Right lobe of liver (tissue), 6 donors: ENCODE measurements at regions of chr6 and their contacts with region 1.

Region 1: DNA sequence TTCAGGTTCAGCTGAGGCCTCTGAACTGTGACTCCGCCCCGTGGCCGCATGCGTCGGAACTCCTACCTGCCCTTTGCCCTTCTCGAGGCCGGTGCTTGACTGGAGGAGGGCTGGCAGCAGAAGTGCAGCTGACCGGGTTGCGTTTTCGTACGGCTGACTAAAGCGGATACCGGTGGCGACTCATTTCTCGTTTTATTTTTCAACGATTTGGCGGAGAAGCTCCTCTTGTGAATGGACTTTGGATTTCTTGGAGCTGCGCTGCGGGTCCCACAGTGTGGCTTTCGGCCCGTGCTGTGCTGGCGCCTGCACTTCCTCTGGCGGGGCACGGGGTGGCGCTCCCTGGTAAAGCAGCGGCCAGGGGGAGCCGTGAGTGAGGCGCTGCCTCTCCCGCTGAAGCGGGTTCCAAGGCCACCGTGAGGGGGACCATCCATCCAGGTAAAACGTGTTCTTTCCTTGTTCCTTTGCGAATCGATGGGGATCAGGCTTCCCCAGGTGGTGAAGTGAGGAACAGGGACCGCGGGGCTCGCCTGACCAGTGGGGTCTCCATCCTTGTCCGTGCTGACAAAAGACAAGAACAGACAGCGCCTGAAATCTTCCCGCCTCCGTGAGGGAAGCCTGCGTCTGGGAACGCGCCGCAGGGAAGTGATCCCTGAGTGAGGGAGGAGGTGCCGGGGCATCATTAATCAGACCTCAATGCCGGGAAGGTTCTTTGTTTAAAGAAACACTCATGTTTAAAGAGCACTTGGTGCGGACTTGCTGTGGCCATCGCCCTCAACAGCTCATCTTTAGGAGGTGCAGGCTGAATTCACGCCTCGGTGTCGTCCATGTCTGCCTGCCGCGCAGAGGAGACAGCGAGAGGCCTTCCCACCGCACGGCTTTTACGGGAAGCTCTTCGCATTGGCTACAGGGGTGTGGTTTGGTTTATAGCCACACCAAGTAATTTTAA is 38.8 kb downstream of the ERMARD start:
- DNase-seq: peak; percentile 86 to 93 (median 92)
- ATAC-seq: peak; percentile 94 to 97 (median 95)
- H3K4me3 ChIP-seq: peak overlapping the region; percentile 48 to 73 (median 65)
- H3K27ac ChIP-seq: peak overlapping the region; percentile 30 to 82 (median 76)
- H3K4me1 ChIP-seq: peaks cover 0 to 18% (median 7%) of the 10 kb centered on the region in 4 donors
- H3K27me3 ChIP-seq: no peaks in the 10 kb centered on the region
- CTCF ChIP-seq: peak; percentile 97 to 99 (median 98)
- POLR2A ChIP-seq: peak; percentile 32

Region 2: GRCh38 chr6:169250660-169251059 is 539.6 kb before region 1 on chr6:
- intact Hi-C with region 1: no loop called
- DNase-seq: peak in 1 of 3 donors; percentile 16
- ATAC-seq: no peak
- H3K4me3 ChIP-seq: no peak overlapping the region
- H3K27ac ChIP-seq: no peak overlapping the region
- H3K4me1 ChIP-seq: no peaks in the 10 kb centered on the region
- H3K27me3 ChIP-seq: no peaks in the 10 kb centered on the region
- CTCF ChIP-seq: no peak
- POLR2A ChIP-seq: no peak

Region 3: DNA sequence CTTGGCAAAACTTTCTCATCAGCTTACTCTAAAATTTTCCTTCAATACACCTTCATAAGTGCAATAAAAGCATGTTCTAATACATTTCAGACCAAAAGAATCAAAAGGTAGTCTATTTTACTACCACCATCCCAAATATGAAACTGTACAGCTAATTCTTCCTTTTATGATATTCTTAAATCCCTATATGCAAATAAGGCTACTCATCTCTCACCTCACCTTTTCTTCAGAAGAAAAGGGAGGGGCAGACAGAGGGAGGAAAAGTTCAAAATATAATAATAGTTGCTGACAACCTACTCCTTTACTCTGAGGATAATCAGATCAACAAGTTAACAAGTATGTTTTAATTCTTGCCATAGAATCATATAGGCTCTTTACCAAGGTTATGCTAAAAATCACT is 81.0 kb before region 1 on chr6:
- intact Hi-C with region 1: no loop called
- DNase-seq: no peak
- ATAC-seq: no peak
- H3K4me3 ChIP-seq: no peak overlapping the region
- H3K27ac ChIP-seq: no peak overlapping the region
- H3K4me1 ChIP-seq: peaks cover 0 to 4% (median under 1%) of the 10 kb centered on the region in 4 donors
- H3K27me3 ChIP-seq: no peaks in the 10 kb centered on the region
- CTCF ChIP-seq: no peak
- POLR2A ChIP-seq: no peak

Region 4: DNA sequence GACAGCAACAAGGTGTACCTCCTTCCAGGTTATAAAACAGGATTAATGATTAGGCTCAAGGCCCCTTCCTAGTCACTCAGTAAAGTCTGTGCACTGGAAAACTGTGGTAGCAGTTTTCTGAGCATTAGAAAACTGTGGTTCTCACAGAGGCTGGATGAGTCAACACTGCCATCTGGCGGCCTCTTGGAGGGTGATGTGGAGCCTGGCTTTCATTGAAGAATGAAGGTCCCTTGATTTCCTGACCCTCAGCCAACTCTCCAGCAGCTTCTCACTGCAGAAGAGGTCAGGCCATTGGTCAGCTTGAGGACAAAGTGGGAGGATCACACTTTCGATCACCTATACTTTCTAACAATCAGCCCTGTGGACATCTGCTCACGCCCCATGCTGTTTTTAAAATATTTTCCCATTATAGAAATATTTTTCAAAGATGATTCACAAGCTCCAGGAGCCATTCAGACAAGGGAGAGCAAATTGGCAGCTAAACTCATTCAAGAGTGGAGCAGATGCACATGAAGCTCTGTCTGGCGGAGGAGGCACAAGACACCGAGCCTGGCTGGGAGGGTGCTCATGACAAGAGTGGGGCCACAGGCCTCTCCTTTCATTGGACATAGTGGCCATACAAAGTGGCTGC is 739.7 kb after region 1 on chr6:
- intact Hi-C with region 1: loop called in 1 of 2 experiments (anchors 10 kb)
- DNase-seq: peak; percentile 77 to 87 (median 82)
- ATAC-seq: peak; percentile 99 to 100 (median 99)
- H3K4me3 ChIP-seq: no peak overlapping the region
- H3K27ac ChIP-seq: no peak overlapping the region
- H3K4me1 ChIP-seq: peaks cover 0 to 5% (median 2%) of the 10 kb centered on the region in 4 donors
- H3K27me3 ChIP-seq: no peaks in the 10 kb centered on the region
- CTCF ChIP-seq: peak; percentile 77 to 95 (median 92)
- POLR2A ChIP-seq: no peak